ENCODE measurements at regions of chr14 and their contacts with region 1.

Region 1: GRCh38 chr14:55579724-55580469 is at the start of gene KTN1:
- DNase-seq: peak; percentile 45 to 63 (median 50)
- H3K4me3 ChIP-seq: peak within 1 kb of the TSS; percentile 74 to 86 (median 81)
- H3K4me3 Mint-ChIP-seq: peak within 1 kb of the TSS; percentile 90 to 95
- H3K27ac ChIP-seq: peak within 1 kb of the TSS; percentile 46 to 64
- H3K27ac Mint-ChIP-seq: peak within 1 kb of the TSS; percentile 64 to 88 (median 83)
- H3K4me1 ChIP-seq: peaks cover 35 to 48% of the 10 kb centered on the region in 2 donors
- H3K4me1 Mint-ChIP-seq: peaks cover 29% of the 10 kb centered on the region
- H3K27me3 ChIP-seq: no peaks in the 10 kb centered on the region
- H3K27me3 Mint-ChIP-seq: peaks cover 0 to 2% (median 2%) of the 10 kb centered on the region in 3 donors
- CTCF ChIP-seq: no peak
- polyA plus RNA-seq, gene KTN1: 4.6 to 31.4 (median 17.9) TPM

Region 2: DNA sequence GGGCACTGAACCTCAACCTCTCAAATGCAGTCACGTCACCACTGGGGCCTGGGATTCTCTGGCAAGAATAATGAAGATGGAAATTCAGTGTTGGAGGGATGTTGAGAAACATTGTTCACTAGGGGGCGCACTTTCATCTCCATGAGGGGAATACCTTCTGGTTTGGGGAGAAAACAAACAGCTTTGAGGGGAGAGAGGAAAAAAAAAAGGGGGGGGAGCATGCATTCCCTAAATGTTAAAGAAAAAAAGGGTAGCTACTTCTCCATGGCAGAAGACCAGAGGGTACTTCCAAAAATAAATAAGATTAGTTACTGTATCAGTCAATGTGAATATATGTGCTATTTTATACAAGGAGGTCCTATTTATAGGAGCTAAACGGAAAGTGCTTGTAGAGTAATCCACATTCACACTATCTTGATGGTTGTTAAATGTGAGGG is 133.7 kb before region 1 on chr14:
- intact Hi-C with region 1: loop called in 1 of 2 experiments (anchors 10 kb)
- DNase-seq: peak; percentile 38 to 61 (median 49)
- H3K4me3 ChIP-seq: no peak overlapping the region
- H3K4me3 Mint-ChIP-seq: no peak overlapping the region
- H3K27ac ChIP-seq: no peak overlapping the region
- H3K27ac Mint-ChIP-seq: no peak overlapping the region
- H3K4me1 ChIP-seq: peaks cover 9 to 10% of the 10 kb centered on the region in 2 donors
- H3K4me1 Mint-ChIP-seq: peaks cover 12% of the 10 kb centered on the region
- H3K27me3 ChIP-seq: no peaks in the 10 kb centered on the region
- H3K27me3 Mint-ChIP-seq: peaks cover 0 to 3% (median 0%) of the 10 kb centered on the region in 3 donors
- CTCF ChIP-seq: peak; percentile 82

Region 3: DNA sequence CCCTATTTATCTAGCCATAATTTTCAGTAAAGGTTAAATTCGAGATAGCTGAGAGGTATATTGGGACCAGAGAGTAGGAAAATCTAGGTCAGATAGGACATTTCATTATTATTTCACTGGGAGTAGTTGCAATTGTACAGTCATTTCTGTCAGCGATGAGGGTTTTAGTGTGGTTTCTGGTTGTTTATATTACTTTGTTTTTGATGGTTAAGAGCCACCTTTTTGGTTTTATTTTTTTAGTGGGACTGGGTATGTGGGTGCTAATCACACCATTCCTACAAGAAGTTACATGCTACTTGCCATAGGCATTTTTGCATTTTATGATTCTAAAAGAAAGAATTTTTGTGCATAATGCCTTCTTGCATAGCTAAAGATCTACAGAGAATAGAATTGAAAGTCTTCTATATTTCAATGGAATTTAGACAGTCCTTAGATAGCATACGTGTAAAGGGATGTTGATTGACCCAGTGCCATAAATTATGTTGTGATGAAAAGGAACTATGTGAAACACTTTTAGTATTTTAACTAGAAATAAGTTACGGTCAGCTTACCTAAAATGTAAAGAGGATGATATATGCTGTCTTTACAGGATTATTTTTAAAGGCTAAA is 85.3 kb after region 1 on chr14:
- intact Hi-C with region 1: no loop called
- DNase-seq: no peak
- H3K4me3 ChIP-seq: no peak overlapping the region
- H3K4me3 Mint-ChIP-seq: no peak overlapping the region
- H3K27ac ChIP-seq: no peak overlapping the region
- H3K27ac Mint-ChIP-seq: no peak overlapping the region
- H3K4me1 ChIP-seq: no peaks in the 10 kb centered on the region
- H3K4me1 Mint-ChIP-seq: no peaks in the 10 kb centered on the region
- H3K27me3 ChIP-seq: no peaks in the 10 kb centered on the region
- H3K27me3 Mint-ChIP-seq: no peaks in the 10 kb centered on the region
- CTCF ChIP-seq: no peak

Region 4: DNA sequence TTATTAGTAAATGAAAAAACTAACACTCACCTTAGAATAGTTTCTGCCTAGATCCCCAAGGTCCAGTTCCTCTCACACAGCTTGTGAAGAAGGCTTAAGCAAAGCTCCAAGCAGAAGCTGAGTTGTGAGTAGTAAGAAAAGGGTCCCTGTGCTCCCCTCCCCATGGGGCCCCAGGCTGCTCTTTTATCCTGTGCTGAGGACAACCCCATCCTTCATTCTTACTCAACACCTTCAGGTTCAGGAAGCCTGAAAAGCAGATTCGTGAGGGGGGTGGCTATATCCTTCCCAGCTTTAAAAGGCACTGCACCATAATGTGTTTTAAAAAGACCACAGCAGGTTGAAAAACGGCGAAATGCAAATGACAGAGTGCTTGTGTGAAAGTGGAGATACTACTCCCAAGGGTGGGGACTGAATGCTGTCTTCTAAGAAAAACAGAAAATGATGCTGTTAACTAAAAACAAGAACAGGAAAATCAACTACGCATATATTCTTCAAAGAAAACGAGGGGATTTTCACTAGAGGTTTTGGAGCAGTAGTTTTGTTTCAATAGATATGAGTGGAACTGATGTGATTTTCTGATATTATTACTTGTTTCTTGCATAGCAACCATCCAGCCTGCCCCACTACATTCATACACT is 182.8 kb after region 1 on chr14:
- intact Hi-C with region 1: no loop called
- DNase-seq: no peak
- H3K4me3 ChIP-seq: no peak overlapping the region
- H3K4me3 Mint-ChIP-seq: no peak overlapping the region
- H3K27ac ChIP-seq: no peak overlapping the region
- H3K27ac Mint-ChIP-seq: no peak overlapping the region
- H3K4me1 ChIP-seq: no peaks in the 10 kb centered on the region
- H3K4me1 Mint-ChIP-seq: no peaks in the 10 kb centered on the region
- H3K27me3 ChIP-seq: peaks cover 0 to 2% of the 10 kb centered on the region in 2 donors
- H3K27me3 Mint-ChIP-seq: peaks cover 0 to 8% (median 3%) of the 10 kb centered on the region in 3 donors
- CTCF ChIP-seq: no peak

Region 5: GRCh38 chr14:56390859-56391258 is 811.0 kb after region 1 on chr14:
- intact Hi-C with region 1: no loop called
- DNase-seq: no peak
- H3K4me3 ChIP-seq: no peak overlapping the region
- H3K4me3 Mint-ChIP-seq: no peak overlapping the region
- H3K27ac ChIP-seq: no peak overlapping the region
- H3K27ac Mint-ChIP-seq: no peak overlapping the region
- H3K4me1 ChIP-seq: peaks cover 3 to 5% of the 10 kb centered on the region in 2 donors
- H3K4me1 Mint-ChIP-seq: peaks cover 6% of the 10 kb centered on the region
- H3K27me3 ChIP-seq: no peaks in the 10 kb centered on the region
- H3K27me3 Mint-ChIP-seq: peaks cover 0 to 3% (median 0%) of the 10 kb centered on the region in 3 donors
- CTCF ChIP-seq: no peak